ENCODE measurements at regions of chrX and their contacts with region 1.

Region 1: DNA sequence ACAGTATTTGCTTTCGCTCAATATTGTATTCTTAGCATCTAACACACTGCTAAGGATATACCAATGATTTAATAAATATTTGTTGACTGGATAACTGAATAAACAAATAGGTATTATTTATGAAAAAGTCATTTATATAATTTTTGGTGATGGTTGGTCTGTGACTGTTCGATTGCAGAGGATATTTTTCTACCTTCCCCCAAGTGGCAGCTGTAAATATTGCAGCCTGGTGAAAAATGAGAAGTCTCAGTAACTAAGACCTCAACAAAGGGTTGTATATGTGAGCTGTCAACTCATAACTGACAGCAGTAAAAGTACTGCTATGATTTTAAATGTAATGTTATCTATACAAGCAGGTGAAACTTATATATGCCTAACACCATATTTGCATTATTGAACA is 36.0 kb downstream of the HTR2C start:
- DNase-seq: no peak
- ATAC-seq: no peak

Region 2: DNA sequence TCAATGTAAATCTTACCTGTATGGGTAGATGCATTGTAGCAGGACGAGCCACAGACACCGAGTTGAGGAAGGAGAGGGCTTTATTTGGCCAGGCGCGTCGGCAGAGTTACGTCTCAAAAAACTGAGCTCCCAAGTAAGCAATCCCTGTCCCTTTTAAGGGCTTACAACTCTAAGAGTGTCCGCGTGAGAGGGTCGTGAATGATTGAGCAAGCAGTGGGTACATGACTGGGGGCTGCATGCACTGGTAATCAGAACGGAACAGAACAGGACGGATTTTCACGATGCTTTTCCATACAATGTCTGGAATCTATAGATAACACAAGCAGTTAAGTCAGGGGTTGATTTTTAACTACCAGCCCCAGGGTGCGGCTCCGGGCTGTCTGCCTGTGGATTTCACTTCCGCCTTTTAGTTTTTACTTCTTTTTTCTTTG is 560.9 kb before region 1 on chrX:
- intact Hi-C with region 1: no loop called
- DNase-seq: no peak
- ATAC-seq: no peak

Region 3: GRCh38 chrX:114532111-114532805 is 87.6 kb before region 1 on chrX:
- intact Hi-C with region 1: no loop called
- DNase-seq: no peak
- ATAC-seq: no peak

Region 4: GRCh38 chrX:115147220-115147619 is 527.3 kb after region 1 on chrX:
- intact Hi-C with region 1: loop called (anchors 10 kb)
- DNase-seq: no peak
- ATAC-seq: no peak